Activated CD8-positive, alpha-beta T cell treated with anti-CD3 and anti-CD28 coated beads for 36 hours (primary cell): ENCODE measurements at regions of chr3 and their contacts with region 1.

Region 1: DNA sequence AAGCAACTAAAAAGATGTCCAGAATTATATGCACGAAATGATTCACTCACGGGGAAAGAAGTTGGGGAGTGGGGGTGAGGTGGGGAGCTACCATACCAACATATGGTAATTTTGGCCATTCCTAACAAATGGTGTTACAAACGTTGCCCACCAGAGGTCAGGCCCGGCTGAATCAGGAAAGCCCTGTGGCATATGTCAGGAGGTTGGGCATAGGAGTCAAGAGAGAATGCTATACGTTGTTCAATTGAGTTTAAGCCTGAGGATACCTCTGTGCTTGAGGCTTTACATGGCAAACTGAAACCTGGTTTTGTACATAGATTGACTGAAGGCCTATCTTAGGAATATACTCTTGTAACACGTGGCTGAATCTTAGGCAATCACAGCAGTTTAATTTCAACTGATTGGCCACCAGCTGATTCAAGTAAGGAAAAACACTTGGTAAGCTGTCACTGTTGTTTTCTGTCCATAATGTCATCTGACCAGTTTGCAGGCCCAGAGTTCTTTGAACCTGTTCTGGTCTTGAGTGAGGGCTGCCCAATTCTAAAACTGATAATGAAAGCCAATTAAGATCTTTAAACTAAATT is 23.4 kb upstream of the SLC2A2 start:
- DNase-seq: peak; percentile 67
- ATAC-seq: peak; percentile 89
- H3K4me3 Mint-ChIP-seq: no peak overlapping the region
- H3K27ac Mint-ChIP-seq: no peak overlapping the region
- H3K4me1 Mint-ChIP-seq: no peaks in the 10 kb centered on the region
- H3K27me3 Mint-ChIP-seq: peaks cover 21% of the 10 kb centered on the region
- CTCF ChIP-seq: peak; percentile 40

Region 2: GRCh38 chr3:171061749-171062148 is 11.8 kb after region 1 on chr3:
- CTCF ChIA-PET with region 1: interaction called, 13 read pairs
- POLR2A ChIA-PET with region 1: no interaction called
- intact Hi-C with region 1: no loop called
- DNase-seq: no peak
- ATAC-seq: no peak
- H3K4me3 Mint-ChIP-seq: no peak overlapping the region
- H3K27ac Mint-ChIP-seq: no peak overlapping the region
- H3K4me1 Mint-ChIP-seq: no peaks in the 10 kb centered on the region
- H3K27me3 Mint-ChIP-seq: no peaks in the 10 kb centered on the region
- CTCF ChIP-seq: no peak